Panc1 (cell line): ENCODE measurements at regions of chr5 and their contacts with region 1.

Region 1: GRCh38 chr5:173075139-173075982 is 19.2 kb downstream of the CREBRF start:
- DNase-seq: no peak
- ATAC-seq: no peak
- H3K4me3 ChIP-seq: no peak overlapping the region
- H3K27ac ChIP-seq: no peak overlapping the region
- H3K4me1 ChIP-seq: no peaks in the 10 kb centered on the region
- H3K27me3 ChIP-seq: no peaks in the 10 kb centered on the region
- CTCF ChIP-seq: no peak

Region 2: GRCh38 chr5:172837640-172838039 is 237.7 kb before region 1 on chr5:
- CTCF ChIA-PET with region 1: no interaction called
- POLR2A ChIA-PET with region 1: no interaction called
- in situ Hi-C with region 1: no loop called
- intact Hi-C with region 1: no loop called
- DNase-seq: no peak
- ATAC-seq: no peak
- H3K4me3 ChIP-seq: 0 out of 4 replicates have a peak overlapping the region, but pooled peaks of 1 of the 2 experiments have one; percentile 10
- H3K27ac ChIP-seq: peak overlapping the region; percentile 88
- H3K4me1 ChIP-seq: peaks cover 49% of the 10 kb centered on the region
- H3K27me3 ChIP-seq: no peaks in the 10 kb centered on the region
- CTCF ChIP-seq: no peak

Region 3: DNA sequence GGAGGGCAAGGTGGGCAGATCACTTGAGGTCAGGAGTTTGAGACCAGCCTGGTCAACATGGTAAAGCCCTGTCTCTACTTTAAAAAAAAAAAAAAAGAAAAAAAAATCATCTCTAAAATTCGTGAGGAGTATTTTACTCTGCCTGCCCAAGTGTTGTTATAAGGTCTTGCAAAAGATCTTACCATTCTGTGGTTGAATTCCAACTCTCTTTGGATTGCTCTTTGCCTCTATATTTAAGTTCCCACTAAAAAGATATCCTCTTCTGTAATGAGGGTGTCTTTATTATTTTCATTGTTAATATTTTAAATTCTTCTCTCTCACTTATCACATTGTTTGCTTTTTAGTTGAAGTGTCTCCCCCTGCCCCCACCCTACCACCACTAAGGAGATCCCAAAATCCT is 14.2 kb after region 1 on chr5:
- CTCF ChIA-PET with region 1: no interaction called
- POLR2A ChIA-PET with region 1: interaction called, 10 read pairs
- in situ Hi-C with region 1: no loop called
- intact Hi-C with region 1: no loop called
- DNase-seq: no peak
- ATAC-seq: no peak
- H3K4me3 ChIP-seq: no peak overlapping the region
- H3K27ac ChIP-seq: no peak overlapping the region
- H3K4me1 ChIP-seq: no peaks in the 10 kb centered on the region
- H3K27me3 ChIP-seq: no peaks in the 10 kb centered on the region
- CTCF ChIP-seq: no peak